Posterior vena cava (tissue), 2 donors: ENCODE measurements at regions of chr2 and their contacts with region 1.

Region 1: GRCh38 chr2:214934006-214934405 is 124.5 kb upstream of the BARD1 start:
- DNase-seq: no peak

Region 2: GRCh38 chr2:214960677-214961076 is 26.7 kb after region 1 on chr2:
- intact Hi-C with region 1: loop called in 1 of 2 experiments (anchors 1 kb)
- DNase-seq: no peak